ENCODE measurements at regions of chr9 and their contacts with region 1.

Region 1: GRCh38 chr9:95510709-95511615 is 5.8 kb downstream of the PTCH1 start:
- DNase-seq: peak; percentile 64 to 87 (median 80)
- ATAC-seq: peak; percentile 75
- H3K4me3 ChIP-seq: peak overlapping the region; percentile 66
- H3K4me3 Mint-ChIP-seq: peak overlapping the region; percentile 90 to 100 (median 96)
- H3K27ac ChIP-seq: peak overlapping the region; percentile 58
- H3K27ac Mint-ChIP-seq: peak overlapping the region; percentile 82 to 94 (median 85)
- H3K4me1 ChIP-seq: peaks cover 14 to 18% of the 10 kb centered on the region in 2 donors
- H3K4me1 Mint-ChIP-seq: peaks cover 26 to 45% (median 39%) of the 10 kb centered on the region in 7 donors
- H3K27me3 ChIP-seq: no peaks in the 10 kb centered on the region
- H3K27me3 Mint-ChIP-seq: peaks cover 0 to 79% (median 3%) of the 10 kb centered on the region in 5 donors

Region 2: DNA sequence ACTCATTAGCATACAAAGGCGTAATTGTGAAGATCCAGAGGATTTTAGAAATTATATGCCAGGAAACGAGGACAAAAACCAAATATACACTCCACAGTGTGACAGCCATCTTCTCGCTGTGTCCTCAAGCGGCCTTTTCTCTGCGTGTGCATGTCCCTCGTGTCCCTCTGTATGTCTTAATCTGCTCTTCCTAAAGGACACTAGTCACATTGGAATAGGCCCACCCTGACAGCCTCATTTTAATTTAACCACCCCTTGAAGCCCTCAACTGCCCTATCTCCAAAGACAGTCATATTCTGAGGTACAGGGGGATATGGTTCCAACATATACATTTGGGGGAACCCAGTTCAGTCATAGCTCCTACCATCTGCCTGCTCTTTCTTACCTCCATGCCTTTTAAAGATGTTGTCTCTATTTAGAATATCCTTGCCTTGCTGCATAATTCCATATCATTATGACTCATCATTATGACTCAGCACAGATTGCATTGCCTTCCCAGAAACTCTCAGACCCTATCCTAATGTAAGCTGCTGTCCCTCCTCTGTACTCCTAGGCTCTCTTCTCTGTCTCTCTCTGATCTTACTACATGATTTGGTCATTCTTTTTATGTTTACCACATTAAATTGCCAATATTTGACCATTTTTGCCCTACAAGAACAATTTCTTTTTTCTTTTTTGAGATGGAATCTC is 573.6 kb before region 1 on chr9:
- CTCF ChIA-PET with region 1: no interaction called
- POLR2A ChIA-PET with region 1: no interaction called
- intact Hi-C with region 1: no loop called
- DNase-seq: no peak
- ATAC-seq: no peak
- H3K4me3 ChIP-seq: no peak overlapping the region
- H3K4me3 Mint-ChIP-seq: no peak overlapping the region
- H3K27ac ChIP-seq: no peak overlapping the region
- H3K27ac Mint-ChIP-seq: no peak overlapping the region
- H3K4me1 ChIP-seq: no peaks in the 10 kb centered on the region
- H3K4me1 Mint-ChIP-seq: peaks cover 0 to 7% (median 0%) of the 10 kb centered on the region in 7 donors
- H3K27me3 ChIP-seq: no peaks in the 10 kb centered on the region
- H3K27me3 Mint-ChIP-seq: no peaks in the 10 kb centered on the region

Region 3: DNA sequence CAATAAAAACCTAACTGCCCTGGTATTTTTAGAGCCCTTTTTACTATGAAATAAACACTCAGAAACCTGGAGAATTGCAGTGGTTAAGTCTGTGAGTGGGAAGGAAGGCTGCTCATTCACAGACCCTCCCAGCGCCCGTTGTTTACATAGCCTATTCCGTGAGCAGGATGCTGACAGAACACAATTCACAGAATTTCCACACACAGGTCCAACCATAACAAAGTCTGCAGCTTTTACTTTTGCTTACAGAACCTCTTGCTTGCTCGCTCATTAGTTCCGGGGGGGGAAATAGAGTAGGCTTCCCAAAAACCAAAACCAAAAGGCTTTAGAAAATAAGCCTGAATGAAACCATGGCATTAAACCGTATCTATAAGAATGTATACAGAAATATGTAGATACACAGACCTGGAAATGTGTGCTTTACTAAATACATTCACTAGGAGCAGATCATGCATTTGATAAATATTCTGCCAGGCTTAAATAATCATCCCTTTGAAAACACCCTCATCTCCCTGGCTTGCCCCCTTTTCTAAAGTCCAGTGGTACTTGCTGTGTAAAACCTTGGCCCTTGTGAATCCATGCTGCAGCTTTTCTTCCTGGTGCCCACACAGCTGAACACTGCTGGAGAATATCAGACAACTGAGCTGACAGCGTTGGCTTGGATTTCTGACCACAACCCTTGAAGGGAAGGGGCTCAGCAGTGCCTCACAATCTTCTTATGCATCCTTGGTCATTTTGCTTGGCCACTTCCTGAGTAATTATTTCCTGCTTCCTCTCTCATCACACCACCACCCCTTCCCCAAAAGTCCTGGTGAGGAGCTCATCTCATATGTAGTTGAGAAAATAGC is 321.5 kb before region 1 on chr9:
- CTCF ChIA-PET with region 1: no interaction called
- POLR2A ChIA-PET with region 1: no interaction called
- intact Hi-C with region 1: loop called in 1 of 2 experiments (anchors 5 kb)
- DNase-seq: peak in 2 of 9 donors; percentile 5 to 42
- ATAC-seq: peak; percentile 32
- H3K4me3 ChIP-seq: no peak overlapping the region
- H3K4me3 Mint-ChIP-seq: peak overlapping the region in 9 of 10 donors; percentile 7 to 77 (median 55)
- H3K27ac ChIP-seq: no peak overlapping the region
- H3K27ac Mint-ChIP-seq: peak overlapping the region in 8 of 9 donors; percentile 26 to 89 (median 63)
- H3K4me1 ChIP-seq: no peaks in the 10 kb centered on the region
- H3K4me1 Mint-ChIP-seq: peaks cover 24 to 47% (median 30%) of the 10 kb centered on the region in 7 donors
- H3K27me3 ChIP-seq: no peaks in the 10 kb centered on the region
- H3K27me3 Mint-ChIP-seq: no peaks in the 10 kb centered on the region

Region 4: DNA sequence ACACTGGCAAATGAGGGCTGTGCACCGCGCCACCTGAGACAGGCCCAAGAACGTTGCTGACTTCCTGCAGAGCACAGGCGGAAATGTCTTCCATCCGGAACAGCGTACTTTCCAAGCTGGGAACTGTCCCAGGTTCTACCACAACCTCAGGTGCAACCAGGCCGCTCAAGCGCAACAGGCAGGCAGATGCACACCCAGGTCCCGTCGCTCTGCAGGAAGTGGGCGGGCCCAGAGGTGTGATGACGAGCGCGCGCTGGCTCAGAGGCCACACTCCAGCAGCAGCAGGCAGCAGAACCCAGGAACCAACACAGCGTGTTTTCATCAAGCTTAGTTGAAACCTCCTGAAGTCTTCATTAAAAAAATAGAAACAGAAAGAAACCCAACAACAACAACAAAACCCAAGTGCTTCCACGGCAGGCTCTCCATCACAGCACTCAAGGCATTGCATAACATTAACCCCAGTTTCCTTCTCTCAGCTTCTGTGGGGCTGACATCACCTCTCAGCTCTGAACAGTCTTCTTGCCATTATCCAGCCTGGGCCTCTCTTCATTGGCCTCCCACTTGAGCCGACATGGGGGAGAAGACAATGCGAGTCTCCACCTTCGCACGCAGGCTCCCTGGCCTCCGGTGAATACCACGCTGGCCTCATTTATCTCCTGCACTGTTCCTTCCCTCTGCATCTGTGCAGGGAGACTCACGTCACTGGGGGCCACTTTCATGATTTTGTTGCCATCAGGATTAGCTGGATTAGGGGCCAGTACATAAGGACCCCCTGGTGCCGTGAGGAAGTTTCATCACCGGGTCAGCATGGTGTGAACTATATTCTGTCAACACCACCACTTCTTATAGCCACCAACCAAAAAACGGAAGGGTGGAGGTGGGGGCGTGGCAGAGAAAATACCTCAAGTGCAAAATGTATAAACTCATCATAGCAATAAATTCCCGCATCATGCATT is 16.3 kb before region 1 on chr9:
- CTCF ChIA-PET with region 1: interaction called, 6 read pairs
- POLR2A ChIA-PET with region 1: interaction called, 13 read pairs
- intact Hi-C with region 1: loop called (anchors 1 kb)
- DNase-seq: peak; percentile 58 to 93 (median 90)
- ATAC-seq: peak; percentile 97
- H3K4me3 ChIP-seq: peak overlapping the region; percentile 67
- H3K4me3 Mint-ChIP-seq: peak overlapping the region; percentile 75 to 94 (median 89)
- H3K27ac ChIP-seq: peak overlapping the region; percentile 63
- H3K27ac Mint-ChIP-seq: peak overlapping the region; percentile 80 to 99 (median 94)
- H3K4me1 ChIP-seq: peaks cover 56 to 59% of the 10 kb centered on the region in 2 donors
- H3K4me1 Mint-ChIP-seq: peaks cover 34 to 81% (median 70%) of the 10 kb centered on the region in 7 donors
- H3K27me3 ChIP-seq: no peaks in the 10 kb centered on the region
- H3K27me3 Mint-ChIP-seq: peaks cover 0 to 42% (median 0%) of the 10 kb centered on the region in 5 donors

Region 5: GRCh38 chr9:96009690-96010472 is 498.9 kb after region 1 on chr9:
- CTCF ChIA-PET with region 1: no interaction called
- POLR2A ChIA-PET with region 1: no interaction called
- intact Hi-C with region 1: loop called in 1 of 2 experiments (anchors 5 kb)
- DNase-seq: peak in 5 of 9 donors; percentile 44 to 68 (median 62)
- ATAC-seq: peak; percentile 83
- H3K4me3 ChIP-seq: no peak overlapping the region
- H3K4me3 Mint-ChIP-seq: peak overlapping the region; percentile 25 to 75 (median 56)
- H3K27ac ChIP-seq: peak overlapping the region; percentile 68
- H3K27ac Mint-ChIP-seq: peak overlapping the region in 8 of 9 donors; percentile 65 to 98 (median 92)
- H3K4me1 ChIP-seq: peaks cover 43 to 57% of the 10 kb centered on the region in 2 donors
- H3K4me1 Mint-ChIP-seq: peaks cover 0 to 55% (median 24%) of the 10 kb centered on the region in 7 donors
- H3K27me3 ChIP-seq: no peaks in the 10 kb centered on the region
- H3K27me3 Mint-ChIP-seq: no peaks in the 10 kb centered on the region

Region 6: GRCh38 chr9:96217754-96218693 is 707.1 kb after region 1 on chr9:
- CTCF ChIA-PET with region 1: interaction called, 3 read pairs
- POLR2A ChIA-PET with region 1: no interaction called
- intact Hi-C with region 1: loop called (anchors 2 to 5 kb)
- DNase-seq: peak; percentile 40 to 86 (median 73)
- ATAC-seq: peak; percentile 93
- H3K4me3 ChIP-seq: peak overlapping the region; percentile 17
- H3K4me3 Mint-ChIP-seq: peak overlapping the region; percentile 65 to 89 (median 77)
- H3K27ac ChIP-seq: no peak overlapping the region
- H3K27ac Mint-ChIP-seq: peak overlapping the region in 6 of 9 donors; percentile 6 to 78 (median 56)
- H3K4me1 ChIP-seq: peaks cover 0 to 11% of the 10 kb centered on the region in 2 donors
- H3K4me1 Mint-ChIP-seq: peaks cover 0 to 22% (median 11%) of the 10 kb centered on the region in 7 donors
- H3K27me3 ChIP-seq: peaks cover 0 to 3% of the 10 kb centered on the region in 2 donors
- H3K27me3 Mint-ChIP-seq: peaks cover 17 to 56% (median 47%) of the 10 kb centered on the region in 5 donors

Measured in naive thymus-derived CD4-positive, alpha-beta T cell (primary cell).